CD8-positive, alpha-beta T cell (primary cell): ENCODE measurements at regions of chr3 and their contacts with region 1.

Region 1: DNA sequence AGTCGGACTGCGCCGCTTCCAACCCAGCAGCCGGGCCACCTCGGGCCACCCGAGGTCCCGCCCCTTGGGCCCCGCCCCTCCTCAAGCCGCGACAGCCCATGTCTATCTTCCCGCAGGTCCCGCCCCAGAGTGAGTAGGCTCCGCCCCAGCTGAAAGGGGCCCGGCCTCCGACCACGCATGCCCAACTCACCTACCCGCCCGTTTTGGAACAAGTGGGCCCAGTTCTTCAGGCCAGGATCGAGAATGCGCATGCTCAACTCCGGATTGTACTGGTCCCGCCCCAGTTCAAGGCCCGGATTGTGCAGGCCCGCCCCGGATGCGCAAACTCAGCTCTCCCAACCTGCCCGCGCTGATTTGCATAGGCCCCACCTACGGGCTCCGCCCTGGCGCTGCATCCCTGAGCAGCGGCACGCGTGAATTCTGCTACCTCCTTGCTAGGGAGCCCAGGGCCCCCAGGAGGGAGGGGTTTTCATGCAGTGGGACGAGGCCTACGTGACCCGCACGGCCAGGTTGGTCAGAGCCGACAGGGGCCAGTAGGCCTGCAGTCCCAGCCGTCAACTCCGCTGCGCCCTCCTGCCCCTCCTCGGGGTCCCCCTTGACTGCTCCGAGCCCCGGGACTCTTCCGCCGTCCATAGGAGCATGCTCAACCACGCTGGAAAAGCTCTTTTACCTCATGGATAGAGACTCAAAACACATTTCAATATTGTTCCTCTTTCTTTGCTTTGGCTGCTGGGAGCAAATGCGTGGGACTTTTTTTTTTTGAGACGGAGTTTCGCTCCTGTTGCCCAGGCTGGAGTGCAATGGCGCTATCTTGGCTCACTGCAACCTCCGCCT is at the start of gene PFKFB4:
- DNase-seq: peak; percentile 97 to 100 (median 99)
- ATAC-seq: peak; percentile 88
- H3K4me3 ChIP-seq: peak within 1 kb of the TSS; percentile 61 to 76
- H3K4me3 Mint-ChIP-seq: peak within 1 kb of the TSS; percentile 87
- H3K27ac ChIP-seq: peak within 1 kb of the TSS in 1 of 2 experiments; percentile 46
- H3K27ac Mint-ChIP-seq: peak within 1 kb of the TSS; percentile 81
- H3K4me1 ChIP-seq: peaks cover 7% of the 10 kb centered on the region
- H3K4me1 Mint-ChIP-seq: peaks cover 23% of the 10 kb centered on the region
- H3K27me3 ChIP-seq: no peaks in the 10 kb centered on the region
- H3K27me3 Mint-ChIP-seq: no peaks in the 10 kb centered on the region
- CTCF ChIP-seq: no peak
- total RNA-seq, gene PFKFB4: 1.2 to 1.3 TPM

Region 2: GRCh38 chr3:46895204-46895660 is 1661.8 kb before region 1 on chr3:
- CTCF ChIA-PET with region 1: no interaction called
- POLR2A ChIA-PET with region 1: no interaction called
- intact Hi-C with region 1: no loop called
- DNase-seq: peak; percentile 61 to 87 (median 79)
- ATAC-seq: peak; percentile 91
- H3K4me3 ChIP-seq: no peak overlapping the region
- H3K4me3 Mint-ChIP-seq: no peak overlapping the region
- H3K27ac ChIP-seq: no peak overlapping the region
- H3K27ac Mint-ChIP-seq: no peak overlapping the region
- H3K4me1 ChIP-seq: no peaks in the 10 kb centered on the region
- H3K4me1 Mint-ChIP-seq: peaks cover 12% of the 10 kb centered on the region
- H3K27me3 ChIP-seq: peaks cover 4 to 18% of the 10 kb centered on the region in 2 experiments
- H3K27me3 Mint-ChIP-seq: peaks cover 54% of the 10 kb centered on the region
- CTCF ChIP-seq: peak; percentile 71

Region 3: DNA sequence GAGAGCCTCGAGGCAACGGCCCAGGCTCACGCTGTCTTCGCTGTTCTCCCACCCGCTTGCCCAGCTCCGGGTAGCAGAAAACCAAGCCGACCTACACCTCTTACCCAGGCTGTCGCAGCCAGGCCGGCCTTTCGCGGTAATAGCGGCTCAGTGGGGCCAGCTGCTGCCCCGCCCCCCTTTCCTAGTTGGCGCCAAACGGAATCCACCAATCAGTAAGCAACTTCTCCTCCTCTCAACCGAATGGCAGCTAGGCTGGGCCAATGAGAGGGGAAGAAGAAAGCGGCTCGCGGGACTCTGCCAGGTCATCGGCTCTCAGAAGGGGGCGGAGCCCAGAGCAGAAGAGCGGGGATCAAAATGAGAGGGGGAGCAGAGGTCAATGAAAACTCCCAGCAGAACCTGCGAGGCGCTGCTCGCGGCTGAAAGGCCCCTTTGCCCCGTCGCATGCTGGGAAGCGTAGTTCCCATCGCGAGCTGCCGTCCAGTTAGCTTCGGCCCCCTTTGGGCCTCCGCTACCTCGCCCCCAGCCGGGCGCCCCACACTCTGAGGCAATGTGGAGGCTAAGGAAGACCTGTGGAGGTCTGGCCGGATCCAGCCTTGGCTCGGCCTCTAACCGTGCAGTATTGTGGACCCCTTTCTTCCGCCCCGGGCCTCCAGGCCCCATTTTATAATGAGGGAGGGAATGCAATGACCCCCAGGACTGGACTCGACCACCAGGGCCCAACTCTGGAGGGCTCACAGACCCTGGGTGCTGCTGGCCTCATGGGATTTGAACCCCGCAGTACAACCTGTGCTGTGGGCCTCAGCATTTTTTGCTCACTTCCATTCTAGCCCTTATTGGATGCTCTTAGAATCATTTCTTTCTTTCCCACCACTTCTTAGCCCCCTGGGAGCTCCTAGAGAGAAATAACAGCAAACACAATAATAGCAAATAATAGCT is 368.5 kb before region 1 on chr3 and contains the start of gene CDC25A:
- CTCF ChIA-PET with region 1: no interaction called
- POLR2A ChIA-PET with region 1: no interaction called
- intact Hi-C with region 1: loop called in 1 of 2 experiments (anchors 2 kb)
- DNase-seq: peak; percentile 85 to 97 (median 92)
- ATAC-seq: peak; percentile 99
- H3K4me3 ChIP-seq: peak within 1 kb of the TSS; percentile 73 to 86
- H3K4me3 Mint-ChIP-seq: peak within 1 kb of the TSS; percentile 93
- H3K27ac ChIP-seq: peak within 1 kb of the TSS in 1 of 2 experiments; percentile 68
- H3K27ac Mint-ChIP-seq: peak within 1 kb of the TSS; percentile 45
- H3K4me1 ChIP-seq: peaks cover 12% of the 10 kb centered on the region
- H3K4me1 Mint-ChIP-seq: peaks cover 14% of the 10 kb centered on the region
- H3K27me3 ChIP-seq: peaks cover 4 to 6% of the 10 kb centered on the region in 2 experiments
- H3K27me3 Mint-ChIP-seq: peaks cover 21% of the 10 kb centered on the region
- CTCF ChIP-seq: no peak
- total RNA-seq, gene CDC25A: 0.31 TPM in 1 of 2 experiments, not detected in the other

Region 4: GRCh38 chr3:48268381-48269183 is 288.4 kb before region 1 on chr3:
- CTCF ChIA-PET with region 1: interaction called, 3 read pairs
- POLR2A ChIA-PET with region 1: no interaction called
- intact Hi-C with region 1: loop called in 1 of 2 experiments (anchors 2 kb)
- DNase-seq: peak; percentile 46 to 92 (median 76)
- ATAC-seq: peak; percentile 97
- H3K4me3 ChIP-seq: peak overlapping the region; percentile 2 to 32
- H3K4me3 Mint-ChIP-seq: peak overlapping the region; percentile 75
- H3K27ac ChIP-seq: peak overlapping the region; percentile 40 to 45
- H3K27ac Mint-ChIP-seq: peak overlapping the region; percentile 94
- H3K4me1 ChIP-seq: peaks cover 16% of the 10 kb centered on the region
- H3K4me1 Mint-ChIP-seq: peaks cover 33% of the 10 kb centered on the region
- H3K27me3 ChIP-seq: no peaks in the 10 kb centered on the region
- H3K27me3 Mint-ChIP-seq: no peaks in the 10 kb centered on the region
- CTCF ChIP-seq: no peak

Region 5: GRCh38 chr3:48446425-48447193 is 110.4 kb before region 1 on chr3 and contains the start of gene ATRIP:
- CTCF ChIA-PET with region 1: interaction called, 3 read pairs
- POLR2A ChIA-PET with region 1: no interaction called
- intact Hi-C with region 1: loop called in 1 of 2 experiments (anchors 1 kb)
- DNase-seq: peak; percentile 70 to 91 (median 86)
- ATAC-seq: peak; percentile 98
- H3K4me3 ChIP-seq: peak within 1 kb of the TSS; percentile 68 to 81
- H3K4me3 Mint-ChIP-seq: peak within 1 kb of the TSS; percentile 85
- H3K27ac ChIP-seq: peak within 1 kb of the TSS; percentile 67 to 74
- H3K27ac Mint-ChIP-seq: peak within 1 kb of the TSS; percentile 92
- H3K4me1 ChIP-seq: peaks cover 24% of the 10 kb centered on the region
- H3K4me1 Mint-ChIP-seq: peaks cover 42% of the 10 kb centered on the region
- H3K27me3 ChIP-seq: no peaks in the 10 kb centered on the region
- H3K27me3 Mint-ChIP-seq: no peaks in the 10 kb centered on the region
- CTCF ChIP-seq: no peak
- total RNA-seq, gene ATRIP: 7.4 to 8.7 TPM

Region 6: GRCh38 chr3:48507351-48508061 is 49.5 kb before region 1 on chr3:
- CTCF ChIA-PET with region 1: interaction called, 197 read pairs
- POLR2A ChIA-PET with region 1: interaction called, 4 read pairs
- intact Hi-C with region 1: loop called in 1 of 2 experiments (anchors 2 kb)
- DNase-seq: peak; percentile 53 to 88 (median 80)
- ATAC-seq: peak; percentile 87
- H3K4me3 ChIP-seq: no peak overlapping the region
- H3K4me3 Mint-ChIP-seq: peak overlapping the region; percentile 47
- H3K27ac ChIP-seq: peak overlapping the region in 1 of 2 experiments; percentile 25
- H3K27ac Mint-ChIP-seq: peak overlapping the region; percentile 72
- H3K4me1 ChIP-seq: peaks cover 36% of the 10 kb centered on the region
- H3K4me1 Mint-ChIP-seq: peaks cover 37% of the 10 kb centered on the region
- H3K27me3 ChIP-seq: no peaks in the 10 kb centered on the region
- H3K27me3 Mint-ChIP-seq: no peaks in the 10 kb centered on the region
- CTCF ChIP-seq: peak; percentile 72

Region 7: DNA sequence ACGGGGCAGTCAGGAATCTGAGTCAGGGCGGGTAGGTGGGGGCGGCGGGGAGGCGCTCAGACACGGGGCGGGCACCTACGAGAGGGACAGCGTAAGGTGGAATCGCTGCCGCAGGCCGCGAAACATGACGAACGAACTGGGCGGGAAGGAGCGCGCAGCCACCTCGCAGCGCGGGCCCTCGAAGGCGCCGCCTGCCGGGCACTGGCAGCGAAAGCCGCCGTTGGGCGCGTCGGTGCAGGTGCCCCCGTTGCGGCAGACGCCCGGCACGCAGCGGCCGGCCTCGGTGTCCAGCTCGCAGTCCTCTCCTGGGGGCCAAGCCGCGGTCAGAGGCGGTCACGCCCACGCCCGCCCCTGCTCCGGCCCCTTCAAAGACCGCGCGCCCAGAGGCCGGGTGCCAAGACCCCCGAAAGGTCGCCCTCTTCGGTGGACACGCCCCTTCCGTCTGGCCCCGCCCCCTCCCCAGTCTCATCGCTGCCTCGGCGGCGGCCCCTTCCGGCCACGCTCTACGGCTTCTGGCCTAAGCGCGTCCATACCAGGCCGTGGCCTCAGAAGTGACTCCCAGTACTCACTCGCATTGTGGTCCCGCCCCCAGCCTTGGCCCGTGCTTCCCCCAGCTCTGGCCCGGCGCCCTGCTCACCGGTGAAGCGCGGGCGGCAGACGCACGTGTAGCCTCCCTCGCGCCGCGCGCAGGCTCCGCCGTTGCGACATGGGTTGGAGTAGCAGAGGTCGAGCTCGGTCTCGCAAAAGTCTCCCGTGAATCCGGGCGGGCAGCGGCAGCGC is 99.2 kb after region 1 on chr3:
- CTCF ChIA-PET with region 1: no interaction called
- POLR2A ChIA-PET with region 1: no interaction called
- intact Hi-C with region 1: loop called in 1 of 2 experiments (anchors 1 kb)
- DNase-seq: peak; percentile 71 to 94 (median 83)
- ATAC-seq: peak; percentile 81
- H3K4me3 ChIP-seq: peak overlapping the region; percentile 53 to 83
- H3K4me3 Mint-ChIP-seq: peak overlapping the region; percentile 83
- H3K27ac ChIP-seq: peak overlapping the region; percentile 65 to 68
- H3K27ac Mint-ChIP-seq: peak overlapping the region; percentile 90
- H3K4me1 ChIP-seq: peaks cover 18% of the 10 kb centered on the region
- H3K4me1 Mint-ChIP-seq: peaks cover 18% of the 10 kb centered on the region
- H3K27me3 ChIP-seq: peaks cover 0 to 4% of the 10 kb centered on the region in 2 experiments
- H3K27me3 Mint-ChIP-seq: peaks cover 11% of the 10 kb centered on the region
- CTCF ChIP-seq: peak; percentile 60

Region 8: DNA sequence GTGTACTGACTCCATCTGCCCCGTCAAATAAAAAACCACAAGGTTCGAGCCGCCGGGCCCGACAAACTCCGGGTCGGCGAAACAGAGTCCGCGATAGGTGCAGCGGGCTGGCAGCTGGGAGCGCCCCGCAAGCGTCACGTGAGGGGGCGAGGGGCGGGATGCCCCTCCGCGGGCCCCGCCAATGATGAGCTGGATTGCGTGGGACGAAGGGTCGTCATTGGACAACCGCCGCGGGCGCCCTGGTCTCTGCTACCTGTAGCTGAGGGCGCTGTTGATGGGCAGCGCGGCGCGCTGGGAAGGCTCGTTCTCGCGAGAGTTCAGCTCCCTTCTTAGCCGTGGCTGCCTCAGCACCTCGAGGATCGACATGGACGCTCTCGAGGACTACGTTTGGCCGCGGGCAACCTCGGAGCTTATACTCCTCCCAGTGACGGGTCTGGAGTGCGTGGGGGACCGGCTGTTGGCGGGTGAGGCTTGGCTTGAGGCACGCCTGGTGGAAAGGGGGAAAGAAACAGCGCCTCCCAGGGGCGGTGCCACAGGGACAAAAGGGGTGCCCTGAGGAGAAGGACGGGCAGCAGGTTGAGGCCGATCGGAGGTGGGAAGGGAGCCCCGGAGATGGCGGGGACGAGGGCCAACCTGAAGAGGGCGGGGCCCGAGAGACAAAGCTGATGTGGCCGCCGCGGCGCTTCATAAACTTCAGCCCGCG is 450.2 kb after region 1 on chr3 and contains the start of gene WDR6:
- CTCF ChIA-PET with region 1: no interaction called
- POLR2A ChIA-PET with region 1: interaction called, 3 read pairs
- intact Hi-C with region 1: loop called in 1 of 2 experiments (anchors 5 kb)
- DNase-seq: peak; percentile 94 to 99 (median 96)
- ATAC-seq: peak; percentile 87
- H3K4me3 ChIP-seq: peak within 1 kb of the TSS; percentile 87 to 92
- H3K4me3 Mint-ChIP-seq: peak within 1 kb of the TSS; percentile 100
- H3K27ac ChIP-seq: peak within 1 kb of the TSS; percentile 81 to 92
- H3K27ac Mint-ChIP-seq: peak within 1 kb of the TSS; percentile 99
- H3K4me1 ChIP-seq: peaks cover 15% of the 10 kb centered on the region
- H3K4me1 Mint-ChIP-seq: peaks cover 30% of the 10 kb centered on the region
- H3K27me3 ChIP-seq: no peaks in the 10 kb centered on the region
- H3K27me3 Mint-ChIP-seq: no peaks in the 10 kb centered on the region
- CTCF ChIP-seq: peak; percentile 34
- total RNA-seq, gene WDR6: 112 to 130 TPM